Mammary epithelial cell (primary cell): ENCODE measurements at regions of chr17 and their contacts with region 1.

Region 1: DNA sequence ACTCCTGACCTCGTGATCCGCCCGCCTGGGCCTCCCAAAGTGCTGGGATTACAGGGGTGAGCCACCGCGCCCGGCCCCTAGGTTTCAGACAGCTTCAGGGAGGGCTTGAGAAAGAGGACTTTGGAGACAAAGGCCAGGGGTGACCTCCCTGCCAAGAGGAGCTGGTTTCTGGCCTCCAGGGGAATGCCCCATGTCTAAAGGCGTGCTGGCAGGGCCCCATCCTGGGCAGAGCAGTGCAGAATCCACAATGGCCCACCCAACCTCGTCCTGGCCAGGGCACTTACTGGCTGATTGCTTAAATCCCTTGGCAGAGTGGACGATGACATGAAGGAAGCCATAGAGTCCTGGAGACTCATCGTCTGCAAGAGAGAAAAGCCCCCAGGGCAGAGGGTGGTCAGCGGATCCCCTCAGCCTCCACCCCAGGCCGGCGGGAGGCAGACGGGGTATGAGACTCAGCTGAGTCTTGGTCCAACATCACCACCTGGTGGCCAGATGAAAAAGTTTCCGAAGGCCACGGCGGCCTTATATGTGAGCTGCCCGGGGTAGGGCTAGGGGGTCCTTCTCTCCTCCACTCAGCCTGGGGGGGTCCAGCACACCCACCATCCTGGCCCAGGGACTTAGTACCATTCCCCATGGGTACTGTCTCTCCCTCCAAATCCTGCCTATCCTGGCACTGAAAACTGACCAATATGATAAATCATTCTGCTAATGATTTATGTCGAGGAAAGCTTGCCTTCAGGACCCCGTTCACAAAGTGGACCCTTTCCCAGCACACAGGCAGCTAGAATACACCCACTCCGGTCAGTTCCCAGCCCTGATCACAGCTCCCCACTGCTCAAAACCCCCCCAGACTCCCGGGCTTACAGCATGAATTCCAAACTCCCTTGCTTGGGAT is 59.1 kb downstream of the TIMM22 start:
- DNase-seq: peak; percentile 27
- H3K4me3 ChIP-seq: no peak overlapping the region
- H3K27ac ChIP-seq: no peak overlapping the region
- H3K4me1 ChIP-seq: peaks cover 5% of the 10 kb centered on the region
- H3K27me3 ChIP-seq: no peaks in the 10 kb centered on the region
- CTCF ChIP-seq: peak; percentile 40 to 75

Region 2: GRCh38 chr17:350706-351448 is 705.1 kb before region 1 on chr17:
- CTCF ChIA-PET with region 1: interaction called, 15 read pairs
- dilution Hi-C with region 1: no loop called
- in situ Hi-C with region 1: no loop called
- intact Hi-C with region 1: no loop called
- DNase-seq: peak; percentile 47
- H3K4me3 ChIP-seq: no peak overlapping the region
- H3K27ac ChIP-seq: peak overlapping the region; percentile 18
- H3K4me1 ChIP-seq: peaks cover 43% of the 10 kb centered on the region
- H3K27me3 ChIP-seq: no peaks in the 10 kb centered on the region
- CTCF ChIP-seq: no peak

Region 3: DNA sequence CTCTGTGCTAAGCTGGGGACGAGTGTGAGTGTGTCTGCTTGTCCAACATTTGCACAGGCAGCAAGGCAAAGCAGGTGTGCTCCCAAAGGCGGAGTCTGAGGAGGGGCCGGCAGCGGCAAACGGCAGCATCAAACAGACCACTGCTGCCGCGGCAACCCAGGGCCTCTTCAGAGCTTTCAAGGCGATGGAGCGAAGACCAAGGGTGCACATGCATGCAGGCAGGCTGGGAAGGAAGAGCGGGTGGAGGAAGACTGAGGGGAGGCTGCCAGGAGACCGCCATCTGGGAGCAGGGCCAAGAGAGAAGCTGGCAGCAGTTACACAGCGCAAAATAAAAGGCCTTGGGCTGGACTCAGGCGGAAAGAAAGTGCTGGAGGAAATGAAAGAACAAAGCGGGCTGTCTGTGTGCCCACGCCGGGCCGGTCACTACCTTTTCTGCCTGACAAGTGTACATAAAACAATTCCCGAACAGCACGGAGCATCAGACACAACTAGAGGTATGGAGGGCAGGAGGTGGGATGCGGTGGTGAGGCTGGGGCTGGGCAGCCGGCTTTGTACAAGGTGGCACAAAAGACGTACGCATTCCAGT is 50.5 kb before region 1 on chr17:
- CTCF ChIA-PET with region 1: interaction called, 4 read pairs
- dilution Hi-C with region 1: loop called (anchors 5 kb)
- in situ Hi-C with region 1: no loop called
- intact Hi-C with region 1: no loop called
- DNase-seq: no peak
- H3K4me3 ChIP-seq: no peak overlapping the region
- H3K27ac ChIP-seq: no peak overlapping the region
- H3K4me1 ChIP-seq: peaks cover 22% of the 10 kb centered on the region
- H3K27me3 ChIP-seq: no peaks in the 10 kb centered on the region
- CTCF ChIP-seq: no peak

Region 4: DNA sequence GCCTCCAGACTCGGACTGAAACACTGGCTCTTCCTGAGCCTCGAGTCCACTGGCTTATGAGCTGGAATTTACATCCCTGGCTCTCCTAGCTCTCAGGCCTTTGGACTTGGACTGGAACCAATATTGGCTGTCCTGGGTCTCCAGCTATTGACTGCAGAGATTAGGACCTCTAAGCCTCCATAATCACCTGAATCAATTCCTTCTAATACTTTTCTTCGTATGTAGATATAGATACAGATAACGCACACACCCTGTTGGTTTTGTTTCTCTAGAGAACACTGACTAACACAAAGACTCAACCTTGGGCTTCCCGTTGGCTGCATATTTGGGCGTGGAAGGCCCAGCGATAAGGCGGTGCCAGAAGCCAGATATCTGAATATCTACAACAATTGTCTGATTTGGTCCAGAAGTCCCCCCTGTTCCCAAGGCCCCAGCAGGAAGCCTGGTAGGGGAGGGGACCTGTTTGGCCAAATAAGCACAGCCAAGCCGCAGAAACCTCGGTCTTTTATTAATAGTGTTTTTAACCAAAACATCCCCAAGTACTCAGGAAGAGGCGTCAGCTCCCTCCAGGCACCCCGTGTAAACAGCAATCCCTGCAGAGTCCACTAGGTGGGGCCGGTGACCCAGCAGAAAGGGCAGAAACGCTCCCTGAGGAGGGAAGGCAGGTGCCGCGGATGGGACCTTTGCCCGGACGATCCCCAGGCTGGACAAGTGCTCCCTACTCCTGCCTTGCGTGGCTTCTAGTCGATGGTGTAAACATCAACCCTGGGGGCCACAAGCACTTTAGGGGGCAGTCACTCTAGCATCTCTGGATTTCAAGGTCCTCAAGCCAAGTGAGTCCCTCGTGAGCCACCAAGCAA is 66.8 kb after region 1 on chr17:
- CTCF ChIA-PET with region 1: interaction called, 10 read pairs
- dilution Hi-C with region 1: no loop called
- in situ Hi-C with region 1: no loop called
- intact Hi-C with region 1: no loop called
- DNase-seq: peak; percentile 68
- H3K4me3 ChIP-seq: no peak overlapping the region
- H3K27ac ChIP-seq: no peak overlapping the region
- H3K4me1 ChIP-seq: peaks cover 20% of the 10 kb centered on the region
- H3K27me3 ChIP-seq: no peaks in the 10 kb centered on the region
- CTCF ChIP-seq: peak; percentile 77 to 86

Region 5: GRCh38 chr17:1186923-1187771 is 131.1 kb after region 1 on chr17:
- CTCF ChIA-PET with region 1: interaction called, 7 read pairs
- dilution Hi-C with region 1: no loop called
- in situ Hi-C with region 1: no loop called
- intact Hi-C with region 1: loop called (anchors 1 kb)
- DNase-seq: peak; percentile 74
- H3K4me3 ChIP-seq: no peak overlapping the region
- H3K27ac ChIP-seq: no peak overlapping the region
- H3K4me1 ChIP-seq: peaks cover 18% of the 10 kb centered on the region
- H3K27me3 ChIP-seq: no peaks in the 10 kb centered on the region
- CTCF ChIP-seq: peak; percentile 95 to 99